ENCODE measurements at regions of chr11 and their contacts with region 1.

Region 1: GRCh38 chr11:36564376-36565030 is 3.3 kb upstream of the RAG1 start:
- DNase-seq: no peak
- H3K4me3 ChIP-seq: peak overlapping the region; percentile 20 to 46 (median 37)
- H3K27ac ChIP-seq: peak overlapping the region in 2 of 4 donors; percentile 38 to 47
- H3K4me1 ChIP-seq: peaks cover 0 to 8% (median 7%) of the 10 kb centered on the region in 4 donors
- H3K27me3 ChIP-seq: no peaks in the 10 kb centered on the region
- CTCF ChIP-seq: peak; percentile 43 to 74 (median 60)
- EP300 ChIP-seq: no peak
- POLR2A ChIP-seq: no peak

Region 2: GRCh38 chr11:36441610-36442208 is 122.8 kb before region 1 on chr11:
- intact Hi-C with region 1: no loop called
- DNase-seq: no peak
- H3K4me3 ChIP-seq: no peak overlapping the region
- H3K27ac ChIP-seq: no peak overlapping the region
- H3K4me1 ChIP-seq: no peaks in the 10 kb centered on the region
- H3K27me3 ChIP-seq: no peaks in the 10 kb centered on the region
- CTCF ChIP-seq: no peak
- EP300 ChIP-seq: no peak
- POLR2A ChIP-seq: no peak

Region 3: DNA sequence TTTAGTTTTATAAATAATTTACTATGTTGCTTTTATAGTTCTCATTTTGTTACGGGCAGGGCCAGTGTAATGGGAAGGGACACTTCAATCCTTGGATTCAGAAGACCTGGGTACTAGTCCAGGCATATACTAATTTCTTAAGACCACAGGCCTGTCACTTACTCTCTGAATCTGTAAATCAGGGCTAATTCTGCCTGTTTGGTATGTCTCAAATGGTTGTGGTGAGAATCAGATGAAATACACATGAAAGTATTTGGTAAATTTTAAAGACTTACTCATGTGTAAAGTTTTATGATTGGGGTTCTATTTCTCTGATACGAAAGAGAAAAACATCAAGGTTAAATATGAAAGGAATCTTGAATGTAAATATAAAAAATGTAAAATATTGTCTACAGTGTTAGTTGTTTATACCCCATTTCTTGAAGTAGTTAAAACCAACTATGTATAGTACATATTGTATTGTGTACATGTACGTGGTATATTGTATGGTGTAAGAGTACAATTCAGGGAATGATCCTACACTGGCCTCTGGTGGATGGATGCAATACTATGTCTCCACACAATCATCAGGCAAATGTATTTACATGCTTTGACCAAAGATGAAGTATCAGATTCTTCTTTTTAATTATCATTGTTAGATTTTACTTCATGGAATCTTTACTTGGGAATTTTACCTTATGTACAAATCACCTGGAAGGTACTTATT is 58.1 kb after region 1 on chr11:
- intact Hi-C with region 1: loop called (anchors 2 kb)
- DNase-seq: no peak
- H3K4me3 ChIP-seq: no peak overlapping the region
- H3K27ac ChIP-seq: no peak overlapping the region
- H3K4me1 ChIP-seq: peaks cover 0 to 40% (median 24%) of the 10 kb centered on the region in 4 donors
- H3K27me3 ChIP-seq: no peaks in the 10 kb centered on the region
- CTCF ChIP-seq: peak; percentile 40 to 69 (median 55)
- EP300 ChIP-seq: no peak
- POLR2A ChIP-seq: no peak

Region 4: GRCh38 chr11:36672813-36673450 is 108.4 kb after region 1 on chr11:
- intact Hi-C with region 1: loop called (anchors 1 kb)
- DNase-seq: no peak
- H3K4me3 ChIP-seq: no peak overlapping the region
- H3K27ac ChIP-seq: no peak overlapping the region
- H3K4me1 ChIP-seq: no peaks in the 10 kb centered on the region
- H3K27me3 ChIP-seq: no peaks in the 10 kb centered on the region
- CTCF ChIP-seq: peak; percentile 44 to 80 (median 72)
- EP300 ChIP-seq: no peak
- POLR2A ChIP-seq: no peak

Region 5: DNA sequence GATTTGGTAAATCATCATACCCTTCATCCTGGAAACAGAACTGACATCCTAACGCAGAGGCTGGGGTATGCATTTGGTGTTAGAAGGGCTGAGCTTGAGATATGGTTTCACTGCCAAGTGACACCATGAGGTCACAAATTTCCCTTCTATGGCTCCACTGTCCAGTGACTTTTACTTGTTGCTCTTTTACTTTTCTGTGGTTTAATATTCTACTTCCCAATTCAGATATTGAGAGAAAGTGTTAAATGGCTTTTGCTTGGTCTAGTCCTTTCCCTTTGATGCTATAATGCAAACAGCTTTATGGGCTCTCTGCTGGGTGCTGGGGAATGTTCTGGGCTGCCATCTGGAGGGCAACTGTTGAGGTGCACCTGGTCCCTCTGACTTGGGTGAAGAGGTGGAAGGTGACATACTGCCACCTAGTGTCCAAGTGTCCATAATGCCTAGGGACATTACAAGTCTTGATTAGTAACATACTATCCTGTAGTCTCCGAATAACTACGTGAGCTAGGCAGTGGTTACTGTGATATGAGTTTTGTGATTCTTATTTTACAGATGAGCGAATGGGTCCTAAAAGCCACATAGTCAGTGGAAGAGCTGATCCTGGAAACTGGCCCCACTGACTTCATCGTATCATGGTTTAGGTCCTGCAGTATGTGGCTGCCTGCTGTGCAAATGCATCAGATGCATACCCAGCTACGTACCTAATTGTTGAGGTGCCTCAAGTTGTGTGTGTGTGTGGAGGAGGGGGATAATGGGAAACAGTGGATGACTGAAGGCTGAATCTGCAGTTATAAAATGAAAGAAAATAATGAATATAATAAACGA is 182.6 kb after region 1 on chr11:
- intact Hi-C with region 1: loop called (anchors 2 kb)
- DNase-seq: peak; percentile 86
- H3K4me3 ChIP-seq: no peak overlapping the region
- H3K27ac ChIP-seq: no peak overlapping the region
- H3K4me1 ChIP-seq: peaks cover 0 to 5% (median 0%) of the 10 kb centered on the region in 4 donors
- H3K27me3 ChIP-seq: no peaks in the 10 kb centered on the region
- CTCF ChIP-seq: peak; percentile 86 to 96 (median 92)
- EP300 ChIP-seq: no peak
- POLR2A ChIP-seq: no peak